Endothelial cell of umbilical vein (primary cell): ENCODE measurements at regions of chr14 and their contacts with region 1.

Region 1: GRCh38 chr14:35404449-35405303 is at the start of gene NFKBIA:
- DNase-seq: peak; percentile 90
- H3K4me3 ChIP-seq: peak within 1 kb of the TSS; percentile 74 to 89 (median 76)
- H3K27ac ChIP-seq: peak within 1 kb of the TSS; percentile 97
- H3K4me1 ChIP-seq: peaks cover 45% of the 10 kb centered on the region
- H3K27me3 ChIP-seq: no peaks in the 10 kb centered on the region
- CTCF ChIP-seq: peak; percentile 18 to 28
- POLR2A ChIP-seq: peak; percentile 90
- total RNA-seq, gene NFKBIA: 52.5 and 55.7 TPM in 2 replicates

Region 2: GRCh38 chr14:34781242-34781641 is 623.4 kb before region 1 on chr14:
- CTCF ChIA-PET with region 1: no interaction called
- POLR2A ChIA-PET with region 1: no interaction called
- dilution Hi-C with region 1: no loop called
- intact Hi-C with region 1: loop called (anchors 5 kb)
- DNase-seq: peak; percentile 95
- H3K4me3 ChIP-seq: peak overlapping the region in 1 of 3 experiments; percentile 40
- H3K27ac ChIP-seq: peak overlapping the region; percentile 95
- H3K4me1 ChIP-seq: peaks cover 22% of the 10 kb centered on the region
- H3K27me3 ChIP-seq: no peaks in the 10 kb centered on the region
- CTCF ChIP-seq: no peak
- POLR2A ChIP-seq: peak; percentile 34

Region 3: DNA sequence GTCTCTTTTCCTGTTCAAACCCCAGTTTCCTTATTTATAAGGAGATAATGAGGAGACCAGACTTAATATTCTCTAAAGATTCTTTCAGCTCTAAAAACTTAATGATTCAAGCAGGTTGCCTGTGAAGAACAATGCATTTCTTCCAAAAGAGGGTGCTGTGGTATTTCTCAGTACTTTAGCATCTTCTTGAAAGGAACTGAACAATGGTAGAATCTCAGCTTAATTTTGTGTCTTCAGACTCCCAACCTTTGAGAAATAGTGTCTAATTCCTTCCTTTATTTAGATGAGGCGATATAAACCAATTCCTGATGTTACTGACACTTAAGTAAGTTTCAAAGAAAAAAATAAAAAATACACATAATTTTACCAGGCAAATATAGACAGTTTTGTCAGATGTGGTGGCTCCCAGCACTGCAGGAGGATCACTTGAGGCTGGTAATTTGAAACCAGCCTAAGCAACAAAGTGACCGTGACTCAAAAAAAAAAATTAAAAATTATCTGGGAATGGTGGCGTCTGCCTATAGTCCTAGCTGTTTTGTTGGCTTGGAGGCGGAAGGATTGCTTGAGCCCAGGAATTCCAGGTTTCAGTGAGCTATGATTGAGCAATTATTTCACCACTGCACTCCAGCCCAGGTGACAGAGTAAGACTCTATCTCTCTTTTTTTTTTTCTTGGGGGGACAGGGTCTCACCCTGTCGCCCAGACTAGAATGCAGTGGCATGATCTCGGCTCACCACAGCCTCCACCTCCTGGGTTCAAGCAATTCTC is 189.4 kb before region 1 on chr14:
- CTCF ChIA-PET with region 1: interaction called, 53 read pairs
- POLR2A ChIA-PET with region 1: interaction called, 3 read pairs
- dilution Hi-C with region 1: no loop called
- intact Hi-C with region 1: loop called (anchors 1 kb)
- DNase-seq: peak; percentile 62
- H3K4me3 ChIP-seq: no peak overlapping the region
- H3K27ac ChIP-seq: peak overlapping the region; percentile 41
- H3K4me1 ChIP-seq: peaks cover 20% of the 10 kb centered on the region
- H3K27me3 ChIP-seq: no peaks in the 10 kb centered on the region
- CTCF ChIP-seq: no peak
- POLR2A ChIP-seq: no peak

Region 4: GRCh38 chr14:35261774-35262173 is 142.9 kb before region 1 on chr14:
- CTCF ChIA-PET with region 1: interaction called, 25 read pairs
- POLR2A ChIA-PET with region 1: interaction called, 3 read pairs
- dilution Hi-C with region 1: no loop called
- intact Hi-C with region 1: loop called (anchors 1 kb)
- DNase-seq: peak; percentile 30
- H3K4me3 ChIP-seq: no peak overlapping the region
- H3K27ac ChIP-seq: no peak overlapping the region
- H3K4me1 ChIP-seq: peaks cover 8% of the 10 kb centered on the region
- H3K27me3 ChIP-seq: no peaks in the 10 kb centered on the region
- CTCF ChIP-seq: no peak
- POLR2A ChIP-seq: no peak

Region 5: DNA sequence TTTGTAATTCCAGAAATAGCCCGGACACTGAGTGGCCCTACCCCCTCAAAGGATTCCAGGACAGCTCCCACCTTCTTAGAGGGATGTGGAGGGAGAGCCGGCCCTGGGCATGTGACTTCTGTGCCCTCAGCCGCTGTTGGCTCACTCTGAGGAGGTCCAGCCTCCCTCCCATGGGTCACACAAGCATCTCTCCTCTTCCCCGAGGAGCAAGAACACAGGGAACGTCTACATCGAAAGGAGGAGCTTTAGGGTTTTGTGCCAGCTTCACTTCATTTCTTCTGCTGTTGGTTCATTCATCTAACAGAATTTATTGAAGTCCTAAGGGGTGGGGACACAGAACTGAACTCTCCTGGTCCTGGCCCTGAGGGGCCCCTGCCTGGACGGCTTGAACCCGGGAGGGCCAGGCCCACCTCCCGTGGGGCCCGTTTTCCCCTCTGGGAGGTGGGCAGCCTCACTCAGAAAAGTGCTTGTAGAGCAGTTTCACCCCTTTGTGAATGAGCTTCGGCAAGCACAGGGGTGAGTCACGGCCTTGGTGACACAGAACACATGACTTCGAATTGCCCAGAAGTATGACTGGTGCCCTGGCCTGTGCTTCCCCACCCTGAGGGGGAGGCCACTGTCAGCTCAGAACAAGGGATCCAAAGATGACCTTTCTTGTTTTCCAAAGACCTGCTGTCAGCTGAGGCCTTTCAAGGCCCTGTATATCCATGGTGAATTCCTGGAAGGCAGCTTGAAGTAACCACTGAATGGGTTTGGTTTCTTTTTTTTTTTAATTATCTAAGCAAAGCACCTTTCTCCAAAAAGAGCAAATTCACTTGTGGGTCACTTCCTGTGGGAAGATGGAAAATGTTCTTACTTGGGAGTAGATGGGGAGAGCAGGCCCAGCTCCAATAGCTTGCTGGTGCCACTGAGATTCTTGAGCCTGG is 39.3 kb before region 1 on chr14:
- CTCF ChIA-PET with region 1: interaction called, 10 read pairs
- POLR2A ChIA-PET with region 1: interaction called, 13 read pairs
- dilution Hi-C with region 1: no loop called
- intact Hi-C with region 1: loop called (anchors 1 kb)
- DNase-seq: peak; percentile 84
- H3K4me3 ChIP-seq: no peak overlapping the region
- H3K27ac ChIP-seq: peak overlapping the region; percentile 31
- H3K4me1 ChIP-seq: peaks cover 27% of the 10 kb centered on the region
- H3K27me3 ChIP-seq: no peaks in the 10 kb centered on the region
- CTCF ChIP-seq: no peak
- POLR2A ChIP-seq: no peak

Region 6: DNA sequence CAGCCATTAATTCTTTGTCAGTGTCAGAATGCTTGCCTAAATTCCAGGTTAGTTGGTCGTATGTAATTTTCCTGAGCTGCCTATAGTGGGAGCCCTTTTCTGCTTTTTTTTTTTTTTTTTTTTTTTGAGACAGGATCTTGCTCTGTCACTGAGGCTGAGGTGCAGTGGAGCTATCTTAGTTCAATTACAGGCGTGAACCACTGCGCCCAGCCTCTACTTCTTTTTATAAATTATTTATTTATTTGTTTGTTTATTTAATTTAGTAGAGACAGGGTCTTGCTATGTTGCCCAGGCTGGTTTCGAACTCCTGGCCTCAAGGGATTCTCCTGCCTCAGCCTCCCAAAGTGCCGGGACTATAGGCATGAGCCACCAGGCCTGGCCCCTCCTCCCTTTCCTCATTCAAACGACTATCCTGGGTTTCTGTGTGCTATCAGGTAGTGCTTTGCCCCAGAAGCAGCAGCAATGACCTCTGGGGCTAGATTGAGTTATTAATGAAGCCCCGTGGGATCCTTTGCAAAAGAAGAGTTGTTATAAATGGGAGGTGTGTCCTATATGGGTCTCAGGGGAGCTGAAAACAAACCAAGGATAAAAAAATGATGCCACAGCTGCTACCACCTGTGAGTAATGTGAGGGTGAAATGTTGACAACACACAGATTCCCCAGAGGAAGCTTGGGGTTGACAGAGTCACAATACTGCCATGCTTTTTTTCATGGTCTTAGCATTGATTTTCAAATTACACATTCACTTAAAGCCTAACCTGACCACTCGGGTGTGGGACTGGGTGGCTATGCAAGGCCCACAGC is 34.4 kb after region 1 on chr14:
- CTCF ChIA-PET with region 1: no interaction called
- POLR2A ChIA-PET with region 1: no interaction called
- dilution Hi-C with region 1: no loop called
- intact Hi-C with region 1: no loop called
- DNase-seq: no peak
- H3K4me3 ChIP-seq: no peak overlapping the region
- H3K27ac ChIP-seq: no peak overlapping the region
- H3K4me1 ChIP-seq: no peaks in the 10 kb centered on the region
- H3K27me3 ChIP-seq: peaks cover 0 to 2% of the 10 kb centered on the region in 2 experiments
- CTCF ChIP-seq: peak; percentile 47 to 53
- POLR2A ChIP-seq: no peak